B cell (primary cell): ENCODE measurements at regions of chr7 and their contacts with region 1.

Region 1: GRCh38 chr7:148334959-148335577 is 255.5 kb upstream of the C7orf33 start:
- DNase-seq: no peak
- ATAC-seq: no peak
- H3K4me3 ChIP-seq: no peak overlapping the region
- H3K4me3 Mint-ChIP-seq: no peak overlapping the region
- H3K27ac ChIP-seq: no peak overlapping the region
- H3K27ac Mint-ChIP-seq: no peak overlapping the region
- H3K4me1 ChIP-seq: peaks cover 15 to 16% of the 10 kb centered on the region in 2 donors
- H3K4me1 Mint-ChIP-seq: peaks cover 18% of the 10 kb centered on the region
- H3K27me3 ChIP-seq: peaks cover 0 to 23% (median 9%) of the 10 kb centered on the region in 4 experiments
- H3K27me3 Mint-ChIP-seq: peaks cover 20% of the 10 kb centered on the region
- CTCF ChIP-seq: no peak

Region 2: GRCh38 chr7:148095066-148095465 is 240.0 kb before region 1 on chr7:
- CTCF ChIA-PET with region 1: no interaction called
- POLR2A ChIA-PET with region 1: no interaction called
- intact Hi-C with region 1: no loop called
- DNase-seq: no peak
- ATAC-seq: no peak
- H3K4me3 ChIP-seq: no peak overlapping the region
- H3K4me3 Mint-ChIP-seq: no peak overlapping the region
- H3K27ac ChIP-seq: no peak overlapping the region
- H3K27ac Mint-ChIP-seq: no peak overlapping the region
- H3K4me1 ChIP-seq: no peaks in the 10 kb centered on the region
- H3K4me1 Mint-ChIP-seq: no peaks in the 10 kb centered on the region
- H3K27me3 ChIP-seq: no peaks in the 10 kb centered on the region
- H3K27me3 Mint-ChIP-seq: no peaks in the 10 kb centered on the region
- CTCF ChIP-seq: no peak

Region 3: GRCh38 chr7:148303295-148304082 is 31.6 kb before region 1 on chr7:
- CTCF ChIA-PET with region 1: no interaction called
- POLR2A ChIA-PET with region 1: interaction called, 4 read pairs
- intact Hi-C with region 1: loop called (anchors 5 kb)
- DNase-seq: peak; percentile 35
- ATAC-seq: peak; percentile 29
- H3K4me3 ChIP-seq: peak overlapping the region in 4 of 5 experiments; percentile 6 to 60 (median 46)
- H3K4me3 Mint-ChIP-seq: peak overlapping the region; percentile 81
- H3K27ac ChIP-seq: peak overlapping the region; percentile 83 to 90
- H3K27ac Mint-ChIP-seq: peak overlapping the region; percentile 95
- H3K4me1 ChIP-seq: peaks cover 60 to 62% of the 10 kb centered on the region in 2 donors
- H3K4me1 Mint-ChIP-seq: peaks cover 65% of the 10 kb centered on the region
- H3K27me3 ChIP-seq: no peaks in the 10 kb centered on the region
- H3K27me3 Mint-ChIP-seq: no peaks in the 10 kb centered on the region
- CTCF ChIP-seq: no peak